ENCODE measurements at regions of chr4 and their contacts with region 1.

Region 1: GRCh38 chr4:145154573-145154972 is 25.8 kb downstream of the OTUD4 start:
- DNase-seq: no peak
- H3K4me3 ChIP-seq: no peak overlapping the region
- H3K27ac ChIP-seq: no peak overlapping the region
- H3K4me1 ChIP-seq: peaks cover 0 to 25% (median 0%) of the 10 kb centered on the region in 6 donors
- H3K27me3 ChIP-seq: no peaks in the 10 kb centered on the region
- CTCF ChIP-seq: peak in 8 of 11 experiments; percentile 18 to 53 (median 40)
- POLR2A ChIP-seq: no peak

Region 2: GRCh38 chr4:145099653-145100052 is 54.9 kb before region 1 on chr4:
- intact Hi-C with region 1: loop called (anchors 10 kb)
- DNase-seq: no peak
- H3K4me3 ChIP-seq: peak overlapping the region; percentile 0 to 96 (median 74)
- H3K27ac ChIP-seq: peak overlapping the region in 4 of 8 donors; percentile 88 to 92 (median 90)
- H3K4me1 ChIP-seq: peaks cover 17 to 87% (median 74%) of the 10 kb centered on the region in 6 donors
- H3K27me3 ChIP-seq: no peaks in the 10 kb centered on the region
- CTCF ChIP-seq: no peak
- POLR2A ChIP-seq: no peak

Region 3: DNA sequence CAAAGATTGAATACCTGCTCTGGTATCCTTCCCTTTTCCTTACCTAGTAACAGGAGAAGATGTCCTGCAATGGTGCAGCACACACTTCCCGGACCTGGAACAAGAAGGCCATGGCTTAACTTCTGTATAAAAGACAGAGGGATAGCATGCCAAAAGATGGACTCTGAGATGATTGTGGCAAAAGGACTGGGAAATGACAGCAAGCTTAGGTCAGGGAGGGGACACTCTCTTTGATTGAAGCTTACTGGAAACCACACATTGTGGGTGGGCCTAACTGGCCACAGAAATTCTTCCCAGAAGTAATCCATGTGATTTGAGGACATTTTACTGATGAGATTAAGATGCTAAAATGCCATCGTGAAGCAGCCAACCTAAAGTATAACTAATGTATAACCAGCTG is 96.8 kb after region 1 on chr4:
- intact Hi-C with region 1: no loop called
- DNase-seq: no peak
- H3K4me3 ChIP-seq: no peak overlapping the region
- H3K27ac ChIP-seq: no peak overlapping the region
- H3K4me1 ChIP-seq: no peaks in the 10 kb centered on the region
- H3K27me3 ChIP-seq: no peaks in the 10 kb centered on the region
- CTCF ChIP-seq: no peak
- POLR2A ChIP-seq: no peak

Region 4: GRCh38 chr4:145557720-145558119 is 403.1 kb after region 1 on chr4:
- intact Hi-C with region 1: loop called (anchors 10 kb)
- DNase-seq: peak; percentile 74
- H3K4me3 ChIP-seq: no peak overlapping the region
- H3K27ac ChIP-seq: no peak overlapping the region
- H3K4me1 ChIP-seq: peaks cover 0 to under 1% (median 0%) of the 10 kb centered on the region in 6 donors
- H3K27me3 ChIP-seq: no peaks in the 10 kb centered on the region
- CTCF ChIP-seq: peak; percentile 54 to 87 (median 79)
- POLR2A ChIP-seq: no peak

Region 5: GRCh38 chr4:145618932-145619638 is 464.5 kb after region 1 on chr4 and contains the start of gene MMAA:
- intact Hi-C with region 1: loop called (anchors 10 kb)
- DNase-seq: peak; percentile 98
- H3K4me3 ChIP-seq: peak within 1 kb of the TSS; percentile 48 to 79 (median 66)
- H3K27ac ChIP-seq: peak within 1 kb of the TSS; percentile 90 to 98 (median 94)
- H3K4me1 ChIP-seq: peaks cover 14 to 46% (median 28%) of the 10 kb centered on the region in 6 donors
- H3K27me3 ChIP-seq: no peaks in the 10 kb centered on the region
- CTCF ChIP-seq: peak in 10 of 11 experiments; percentile 41 to 74 (median 68)
- POLR2A ChIP-seq: peak; percentile 53 to 92 (median 71)
- total RNA-seq, gene MMAA: 4.5 to 9.3 (median 8.4) TPM